Activated CD8-positive, alpha-beta T cell treated with anti-CD3 and anti-CD28 coated beads, Interleukin-2, amount 10 ng/mL, durations not matched to agents 7 days and 5 days (primary cell): ENCODE measurements at regions of chr11 and their contacts with region 1.

Region 1: DNA sequence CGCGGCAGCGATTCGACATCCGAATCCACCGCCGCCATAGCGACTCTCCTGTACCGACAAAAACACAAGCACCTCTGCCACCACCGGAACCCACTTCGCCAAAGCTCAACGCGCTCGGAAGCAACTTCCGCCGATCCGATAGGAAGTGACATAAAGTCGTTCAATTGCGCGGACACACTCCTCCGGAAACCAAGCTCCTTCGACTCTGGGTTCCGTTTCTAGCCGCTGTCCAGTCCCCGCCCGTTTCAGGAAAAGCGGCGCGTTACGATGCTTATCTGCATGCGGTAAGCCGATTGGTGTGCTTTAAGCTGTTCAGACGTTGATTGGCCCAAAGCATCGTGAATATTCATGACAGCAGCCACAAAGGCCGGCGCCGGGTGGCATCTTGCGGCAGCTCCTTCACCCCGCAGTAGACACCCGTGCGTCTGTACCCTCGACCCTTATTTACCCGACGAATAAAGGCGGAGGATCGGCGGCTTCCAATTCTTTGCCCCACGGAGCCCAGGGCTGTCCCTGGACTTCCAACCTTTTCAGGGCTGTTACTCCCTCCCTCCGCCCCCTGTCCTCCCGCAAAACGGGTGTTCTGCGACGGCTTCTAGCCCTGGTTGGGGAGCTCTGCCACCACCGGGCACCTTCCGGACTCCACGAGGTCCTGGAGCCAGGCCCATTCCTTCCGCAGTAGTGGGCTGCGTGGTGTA is at the start of gene TUT1:
- DNase-seq: peak; percentile 99
- ATAC-seq: peak; percentile 88
- H3K4me3 Mint-ChIP-seq: peak within 1 kb of the TSS; percentile 91
- H3K27ac Mint-ChIP-seq: peak within 1 kb of the TSS; percentile 93
- H3K4me1 Mint-ChIP-seq: peaks cover 55% of the 10 kb centered on the region
- H3K27me3 Mint-ChIP-seq: no peaks in the 10 kb centered on the region
- total RNA-seq, gene TUT1: 22.2 to 25.0 TPM

Region 2: DNA sequence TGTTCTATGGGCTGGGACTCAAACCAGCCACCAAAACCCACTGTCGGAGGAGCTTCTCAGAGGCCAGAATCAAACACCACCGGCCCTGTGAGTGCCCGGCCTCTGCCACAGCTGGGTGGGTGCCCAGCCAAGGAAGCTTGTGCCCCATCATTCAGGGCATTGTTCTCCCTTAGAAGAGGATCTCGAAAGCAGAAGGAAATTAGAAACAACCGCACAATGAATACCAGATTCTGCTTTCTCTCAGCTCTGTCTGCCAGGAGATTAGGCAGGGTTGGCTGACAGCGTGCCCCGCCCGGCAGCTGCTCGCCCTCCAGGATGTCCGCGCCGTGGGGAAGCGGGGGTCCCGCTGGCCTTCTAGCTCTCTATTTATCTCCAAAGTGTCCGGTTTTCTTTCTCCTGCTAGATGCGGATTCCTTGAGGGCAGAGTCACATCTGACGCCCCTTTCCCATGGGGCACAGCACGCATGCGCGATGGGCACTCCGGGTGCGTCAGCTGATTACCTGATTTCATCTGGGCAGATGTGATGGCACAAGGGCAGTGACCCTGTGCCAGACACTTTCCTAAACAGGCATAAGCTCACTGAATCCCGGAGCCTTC is 147.3 kb before region 1 on chr11:
- CTCF ChIA-PET with region 1: no interaction called
- POLR2A ChIA-PET with region 1: no interaction called
- DNase-seq: peak; percentile 32
- ATAC-seq: peak; percentile 42
- H3K4me3 Mint-ChIP-seq: peak overlapping the region; percentile 64
- H3K27ac Mint-ChIP-seq: no peak overlapping the region
- H3K4me1 Mint-ChIP-seq: peaks cover 3% of the 10 kb centered on the region
- H3K27me3 Mint-ChIP-seq: peaks cover 30% of the 10 kb centered on the region

Region 3: GRCh38 chr11:62497132-62497915 is 94.3 kb before region 1 on chr11:
- CTCF ChIA-PET with region 1: no interaction called
- POLR2A ChIA-PET with region 1: no interaction called
- DNase-seq: peak; percentile 26
- ATAC-seq: no peak
- H3K4me3 Mint-ChIP-seq: no peak overlapping the region
- H3K27ac Mint-ChIP-seq: no peak overlapping the region
- H3K4me1 Mint-ChIP-seq: peaks cover 4% of the 10 kb centered on the region
- H3K27me3 Mint-ChIP-seq: peaks cover 15% of the 10 kb centered on the region

Region 4: GRCh38 chr11:62542750-62543567 is 48.6 kb before region 1 on chr11:
- CTCF ChIA-PET with region 1: interaction called, 26 read pairs
- POLR2A ChIA-PET with region 1: interaction called, 10 read pairs
- DNase-seq: peak; percentile 81
- ATAC-seq: peak; percentile 36
- H3K4me3 Mint-ChIP-seq: peak overlapping the region; percentile 90
- H3K27ac Mint-ChIP-seq: peak overlapping the region; percentile 84
- H3K4me1 Mint-ChIP-seq: peaks cover 78% of the 10 kb centered on the region
- H3K27me3 Mint-ChIP-seq: peaks cover 7% of the 10 kb centered on the region

Region 5: DNA sequence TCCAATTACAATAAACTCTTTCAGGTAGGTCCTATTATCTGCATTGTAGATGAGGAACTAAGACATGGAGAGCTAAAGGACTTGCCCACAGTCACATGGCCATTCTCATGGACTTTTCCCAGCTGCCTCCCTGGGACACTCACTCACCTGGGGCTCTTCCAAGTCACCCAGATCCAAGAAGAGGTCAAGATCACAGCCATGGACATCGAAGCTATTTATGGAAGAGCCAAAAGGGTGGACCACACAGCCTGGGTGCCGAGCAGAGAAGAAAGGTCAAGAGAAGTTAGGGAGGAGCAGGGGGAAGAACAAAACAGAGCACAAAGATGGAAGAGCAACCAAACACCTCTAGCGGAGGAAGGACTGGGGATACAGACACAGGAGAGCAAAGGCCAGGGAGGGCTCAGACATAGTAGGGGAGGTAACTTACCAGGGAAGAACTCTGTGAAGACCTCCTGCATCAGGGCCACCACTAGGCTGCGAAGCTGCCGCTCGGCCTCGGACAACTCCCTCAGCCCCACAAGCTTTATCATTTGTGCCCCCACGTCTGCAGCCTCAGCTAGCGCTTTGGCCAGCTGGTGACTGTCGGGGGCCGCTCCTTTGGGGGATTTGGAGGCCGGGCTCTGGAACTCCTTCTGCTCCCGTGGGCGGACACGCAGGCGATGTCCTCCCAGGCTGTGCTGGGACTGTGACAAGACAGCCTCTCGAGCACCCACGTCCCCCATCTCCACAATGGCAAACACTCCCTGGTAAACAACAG is 10.5 kb before region 1 on chr11:
- CTCF ChIA-PET with region 1: interaction called, 3 read pairs
- POLR2A ChIA-PET with region 1: interaction called, 13 read pairs
- DNase-seq: no peak
- ATAC-seq: no peak
- H3K4me3 Mint-ChIP-seq: no peak overlapping the region
- H3K27ac Mint-ChIP-seq: no peak overlapping the region
- H3K4me1 Mint-ChIP-seq: peaks cover 2% of the 10 kb centered on the region
- H3K27me3 Mint-ChIP-seq: no peaks in the 10 kb centered on the region

Region 6: GRCh38 chr11:62645956-62646824 is 54.6 kb after region 1 on chr11 and contains the start of gene GANAB:
- CTCF ChIA-PET with region 1: interaction called, 23 read pairs
- POLR2A ChIA-PET with region 1: interaction called, 11 read pairs
- DNase-seq: peak; percentile 100
- ATAC-seq: peak; percentile 98
- H3K4me3 Mint-ChIP-seq: peak within 1 kb of the TSS; percentile 99
- H3K27ac Mint-ChIP-seq: peak within 1 kb of the TSS; percentile 96
- H3K4me1 Mint-ChIP-seq: peaks cover 32% of the 10 kb centered on the region
- H3K27me3 Mint-ChIP-seq: no peaks in the 10 kb centered on the region
- total RNA-seq, gene GANAB: 297 to 310 TPM

Region 7: GRCh38 chr11:62671575-62672389 is 80.2 kb after region 1 on chr11 and contains the starts of genes LBHD1 and UQCC3:
- CTCF ChIA-PET with region 1: interaction called, 11 read pairs
- POLR2A ChIA-PET with region 1: interaction called, 39 read pairs
- DNase-seq: peak; percentile 81
- ATAC-seq: peak; percentile 85
- H3K4me3 Mint-ChIP-seq: peak within 1 kb of the TSS; percentile 99
- H3K27ac Mint-ChIP-seq: peak within 1 kb of the TSS; percentile 99
- H3K4me1 Mint-ChIP-seq: peaks cover 67% of the 10 kb centered on the region
- H3K27me3 Mint-ChIP-seq: no peaks in the 10 kb centered on the region
- total RNA-seq, gene LBHD1: 22.3 to 25.0 TPM
- total RNA-seq, gene UQCC3: 7.5 TPM

Region 8: DNA sequence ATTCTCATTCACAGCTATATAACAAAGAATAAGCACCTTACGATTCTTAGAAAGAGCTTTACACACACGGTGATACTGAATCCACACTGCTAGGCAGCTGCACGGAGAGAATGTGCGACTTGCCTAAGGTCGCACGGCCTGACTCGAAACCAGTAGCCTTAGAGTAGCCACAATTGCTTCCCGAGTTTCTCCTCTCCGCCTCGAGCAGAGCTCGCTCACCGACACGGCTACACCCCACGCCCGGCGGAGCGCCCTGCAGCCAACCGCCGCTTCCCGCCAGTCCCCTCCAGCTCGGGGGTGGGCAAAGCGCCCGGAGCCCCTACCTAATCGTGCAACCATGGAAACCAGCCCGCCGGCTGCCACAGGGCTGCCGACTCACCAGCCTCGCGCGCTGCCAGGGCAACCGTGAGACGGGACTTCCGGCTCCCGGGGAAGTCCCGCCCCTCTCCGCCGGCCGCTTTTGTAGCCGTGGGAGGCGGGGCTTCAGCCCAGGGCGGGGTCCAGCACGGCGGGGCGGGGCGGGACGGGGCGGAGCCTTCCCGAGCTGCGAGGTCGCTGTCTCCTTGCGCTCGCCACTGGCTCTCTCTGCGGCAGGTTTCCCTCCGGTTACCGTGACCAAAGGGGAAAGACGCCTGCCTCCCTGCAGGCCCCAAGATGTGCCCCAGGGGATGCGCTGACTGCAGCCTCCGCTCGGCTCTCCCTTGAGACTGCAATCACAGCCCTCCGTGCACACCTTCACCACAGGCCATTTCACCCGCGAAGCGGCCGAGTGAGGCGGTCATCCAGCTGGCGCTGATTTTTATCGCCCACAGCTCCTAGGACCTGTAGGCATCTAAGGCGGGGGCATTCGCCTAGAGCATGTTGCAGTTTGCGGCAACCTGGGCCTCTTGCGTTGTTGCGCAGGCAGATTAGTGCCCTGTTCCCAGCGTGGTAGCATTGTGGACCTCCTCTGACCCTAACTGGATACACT is 114.6 kb after region 1 on chr11:
- CTCF ChIA-PET with region 1: interaction called, 5 read pairs
- POLR2A ChIA-PET with region 1: interaction called, 15 read pairs
- DNase-seq: peak; percentile 95
- ATAC-seq: peak; percentile 67
- H3K4me3 Mint-ChIP-seq: peak overlapping the region; percentile 90
- H3K27ac Mint-ChIP-seq: peak overlapping the region; percentile 83
- H3K4me1 Mint-ChIP-seq: peaks cover 49% of the 10 kb centered on the region
- H3K27me3 Mint-ChIP-seq: no peaks in the 10 kb centered on the region